ENCODE measurements at regions of chr5 and their contacts with region 1.

Region 1: GRCh38 chr5:127030259-127031146 is at the start of gene MARCHF3:
- DNase-seq: peak; percentile 96
- H3K4me3 ChIP-seq: peak within 1 kb of the TSS; percentile 86
- H3K27ac ChIP-seq: peak within 1 kb of the TSS; percentile 51
- H3K4me1 ChIP-seq: peaks cover 22% of the 10 kb centered on the region
- CTCF ChIP-seq: 0 out of 2 replicates have a peak, but pooled peaks have one; percentile 30
- total RNA-seq, gene MARCHF3: 7.0 and 9.2 TPM in 2 replicates

Region 2: DNA sequence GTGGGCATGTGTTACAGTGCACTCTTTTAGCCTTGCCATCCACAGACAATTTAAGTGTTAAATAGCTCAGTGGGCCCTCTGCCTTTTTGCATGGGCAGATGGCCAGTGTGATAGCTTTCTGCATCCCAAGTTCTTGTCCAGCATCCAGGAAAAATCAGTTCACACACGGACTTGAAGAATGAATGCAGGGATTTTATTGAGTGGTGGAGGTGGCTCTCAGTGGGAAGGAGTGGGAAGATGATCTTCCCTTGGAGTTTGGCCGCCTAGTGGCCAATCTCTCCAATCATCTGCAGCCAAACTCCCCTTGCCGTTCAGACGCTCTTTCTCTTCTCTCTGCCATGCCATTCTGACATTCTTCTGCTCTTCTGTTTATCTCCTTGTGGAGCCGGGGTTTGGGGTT is 929.7 kb before region 1 on chr5:
- CTCF ChIA-PET with region 1: no interaction called
- POLR2A ChIA-PET with region 1: no interaction called
- intact Hi-C with region 1: no loop called
- DNase-seq: no peak
- H3K4me3 ChIP-seq: no peak overlapping the region
- H3K27ac ChIP-seq: no peak overlapping the region
- H3K4me1 ChIP-seq: no peaks in the 10 kb centered on the region
- CTCF ChIP-seq: peak; percentile 44

Region 3: DNA sequence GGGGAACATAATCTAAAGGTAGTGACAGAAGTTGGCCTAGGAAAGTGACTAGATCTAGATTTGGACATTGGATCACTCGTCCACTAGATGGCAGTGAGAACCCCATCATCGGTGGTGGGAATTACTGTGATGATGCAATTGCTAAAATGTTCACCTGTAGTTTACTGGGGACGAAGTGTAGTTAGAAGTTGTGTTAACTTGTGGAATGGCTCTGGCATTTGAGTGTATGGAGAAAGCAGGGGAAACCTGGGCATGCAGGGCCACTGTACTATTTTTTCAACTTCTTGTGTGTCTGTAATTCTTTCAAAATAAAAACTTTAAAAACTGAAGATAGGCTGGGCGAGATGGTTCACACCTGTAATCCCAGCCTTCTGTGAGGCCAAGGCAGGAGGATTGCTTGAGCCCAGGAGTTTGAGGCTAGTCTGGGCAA is 354.3 kb before region 1 on chr5:
- CTCF ChIA-PET with region 1: no interaction called
- POLR2A ChIA-PET with region 1: no interaction called
- intact Hi-C with region 1: loop called (anchors 10 kb)
- DNase-seq: peak; percentile 82
- H3K4me3 ChIP-seq: no peak overlapping the region
- H3K27ac ChIP-seq: no peak overlapping the region
- H3K4me1 ChIP-seq: peaks cover 15% of the 10 kb centered on the region
- CTCF ChIP-seq: peak; percentile 95

Region 4: DNA sequence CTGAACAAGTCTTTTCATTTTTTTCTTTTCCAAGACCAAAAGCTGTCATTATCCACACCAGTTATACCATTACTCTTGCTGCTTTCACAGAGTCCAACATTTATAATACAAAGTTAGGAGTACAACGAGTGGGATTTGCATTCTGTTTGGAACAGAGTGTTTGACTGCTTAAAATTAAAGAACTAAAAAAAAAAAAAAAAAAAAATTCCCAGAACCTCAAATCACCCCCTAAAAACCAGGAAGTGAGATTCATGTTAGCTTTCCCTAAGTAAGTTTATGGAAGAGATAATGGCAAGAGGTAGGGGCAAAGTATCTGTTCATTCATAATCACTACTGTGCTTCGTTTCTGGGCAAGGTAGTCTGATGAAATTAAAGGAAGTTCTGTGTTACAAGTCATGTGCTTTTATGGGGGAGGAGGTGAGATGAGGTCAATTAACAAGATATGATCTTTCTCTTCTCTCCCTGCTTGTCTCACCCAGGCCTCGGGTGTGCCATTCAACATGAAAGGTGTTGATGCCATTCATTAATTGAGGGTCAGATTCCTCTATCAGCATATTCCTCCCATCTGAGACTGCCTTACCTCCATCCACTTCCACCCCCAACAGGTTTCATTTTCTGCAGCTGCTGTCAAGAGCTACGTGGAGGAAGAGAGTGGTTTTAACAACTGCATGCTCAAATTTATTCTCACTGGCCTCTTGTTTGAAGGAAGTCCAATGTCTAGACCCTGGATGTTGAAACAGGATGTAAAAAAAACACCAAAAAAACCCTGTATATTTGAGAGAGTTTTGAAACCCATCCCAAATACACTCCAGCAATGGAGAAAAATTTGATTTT is 58.2 kb before region 1 on chr5:
- CTCF ChIA-PET with region 1: no interaction called
- POLR2A ChIA-PET with region 1: interaction called, 6 read pairs
- intact Hi-C with region 1: loop called (anchors 2 kb)
- DNase-seq: peak; percentile 83
- H3K4me3 ChIP-seq: peak overlapping the region; percentile 63
- H3K27ac ChIP-seq: peak overlapping the region; percentile 90
- H3K4me1 ChIP-seq: peaks cover 78% of the 10 kb centered on the region
- CTCF ChIP-seq: no peak

Region 5: GRCh38 chr5:127423173-127423798 is 392.8 kb after region 1 on chr5:
- CTCF ChIA-PET with region 1: no interaction called
- POLR2A ChIA-PET with region 1: no interaction called
- intact Hi-C with region 1: no loop called
- DNase-seq: no peak
- H3K4me3 ChIP-seq: no peak overlapping the region
- H3K27ac ChIP-seq: no peak overlapping the region
- H3K4me1 ChIP-seq: no peaks in the 10 kb centered on the region
- CTCF ChIP-seq: no peak